Sigmoid colon (tissue), 7 donors: ENCODE measurements at regions of chr14 and their contacts with region 1.

Region 1: DNA sequence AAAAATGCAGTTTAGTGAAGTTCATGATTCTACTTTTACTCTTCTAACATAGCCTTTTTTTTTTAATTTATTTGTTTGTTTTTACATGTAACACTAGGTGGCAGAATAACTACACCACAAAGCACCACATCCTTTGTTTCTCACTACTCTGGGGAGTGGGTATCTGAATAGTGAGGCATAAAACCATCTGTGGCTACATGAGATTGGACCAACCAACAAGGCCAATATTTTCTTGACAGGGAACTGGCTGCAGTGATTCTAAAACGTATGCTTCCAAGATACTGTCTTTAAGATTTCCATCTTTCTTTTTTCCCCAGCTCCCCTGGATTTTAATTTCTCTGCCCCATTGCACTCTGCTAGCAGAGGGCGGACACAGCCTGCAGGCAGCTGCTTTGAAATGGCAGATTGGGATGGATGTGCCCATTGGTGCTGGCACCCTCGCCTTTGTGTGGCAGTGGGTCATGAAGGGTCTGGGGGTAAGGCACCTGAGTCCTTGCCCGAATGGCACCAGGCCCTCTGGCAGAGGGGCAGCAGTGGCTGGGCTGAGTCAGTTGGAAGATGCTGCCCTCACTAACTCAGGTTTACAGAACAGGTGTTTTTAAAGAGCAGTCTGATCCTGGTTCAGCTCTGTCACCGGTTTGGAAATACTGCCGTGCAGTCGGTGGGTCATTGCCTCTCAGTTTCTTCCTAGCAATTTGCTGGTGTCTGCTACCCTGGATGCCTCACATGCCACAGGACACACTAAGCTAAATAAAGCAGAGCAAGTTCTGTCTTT is 429.1 kb downstream of the RAD51B start:
- DNase-seq: peak; percentile 77
- H3K4me3 ChIP-seq: no peak overlapping the region
- H3K27ac ChIP-seq: peak overlapping the region; percentile 81 to 90 (median 88)
- H3K4me1 ChIP-seq: peaks cover 0 to 93% (median 82%) of the 10 kb centered on the region in 4 donors
- H3K27me3 ChIP-seq: no peaks in the 10 kb centered on the region
- CTCF ChIP-seq: peak in 3 of 4 experiments; percentile 50 to 75 (median 66)
- EP300 ChIP-seq: peak in 1 of 4 donors; percentile 14
- POLR2A ChIP-seq: no peak

Region 2: GRCh38 chr14:67583711-67584644 is 664.7 kb before region 1 on chr14:
- intact Hi-C with region 1: no loop called
- DNase-seq: no peak
- H3K4me3 ChIP-seq: no peak overlapping the region
- H3K27ac ChIP-seq: no peak overlapping the region
- H3K4me1 ChIP-seq: no peaks in the 10 kb centered on the region
- H3K27me3 ChIP-seq: no peaks in the 10 kb centered on the region
- CTCF ChIP-seq: peak; percentile 34 to 54 (median 42)
- EP300 ChIP-seq: no peak
- POLR2A ChIP-seq: no peak

Region 3: DNA sequence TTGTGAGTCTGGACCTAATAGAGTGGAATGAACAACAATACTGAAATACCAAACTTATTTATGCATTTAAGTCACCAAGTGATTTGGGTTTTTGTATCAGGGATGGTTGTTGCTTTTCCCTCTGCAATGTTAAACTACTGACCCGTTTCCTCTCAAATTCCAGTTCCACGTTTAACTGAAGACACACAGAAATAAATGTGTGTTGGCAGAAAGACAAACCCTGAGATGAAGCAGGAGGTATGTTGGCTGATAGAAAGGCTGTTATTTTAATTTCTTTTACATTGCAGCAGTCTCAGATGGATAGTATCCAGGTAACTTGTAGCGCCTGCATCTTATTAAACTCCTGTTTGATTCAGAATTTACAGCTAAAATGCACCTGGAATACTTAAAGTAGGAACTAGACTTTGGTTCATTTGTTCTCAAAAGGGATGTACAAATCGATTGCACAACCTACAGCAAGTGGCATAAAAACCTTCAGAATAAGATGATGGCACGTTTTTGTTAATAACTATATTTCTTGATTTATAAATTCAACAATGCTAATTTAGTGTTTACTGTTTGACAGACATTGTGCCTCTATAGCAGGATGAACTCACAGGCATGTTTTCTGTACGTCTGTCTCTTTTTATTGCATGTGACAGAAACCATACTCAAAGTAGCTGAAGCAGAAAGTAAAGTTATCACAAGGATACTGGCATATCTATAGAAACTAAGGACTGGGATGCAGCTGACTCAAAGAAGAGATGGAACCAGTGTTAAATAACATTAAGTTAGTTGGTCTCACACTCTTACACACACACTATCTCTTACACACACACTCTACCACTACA is 138.5 kb after region 1 on chr14:
- intact Hi-C with region 1: loop called (anchors 5 kb)
- DNase-seq: no peak
- H3K4me3 ChIP-seq: no peak overlapping the region
- H3K27ac ChIP-seq: peak overlapping the region in 3 of 4 donors; percentile 42 to 77 (median 74)
- H3K4me1 ChIP-seq: peaks cover 0 to 77% (median 58%) of the 10 kb centered on the region in 4 donors
- H3K27me3 ChIP-seq: no peaks in the 10 kb centered on the region
- CTCF ChIP-seq: no peak
- EP300 ChIP-seq: peak in 2 of 4 donors; percentile 58 to 64
- POLR2A ChIP-seq: no peak

Region 4: GRCh38 chr14:68520637-68521556 is 272.2 kb after region 1 on chr14:
- intact Hi-C with region 1: loop called (anchors 5 kb)
- DNase-seq: no peak
- H3K4me3 ChIP-seq: no peak overlapping the region
- H3K27ac ChIP-seq: peak overlapping the region; percentile 52 to 73 (median 71)
- H3K4me1 ChIP-seq: peaks cover 0 to 74% (median 50%) of the 10 kb centered on the region in 4 donors
- H3K27me3 ChIP-seq: no peaks in the 10 kb centered on the region
- CTCF ChIP-seq: no peak
- EP300 ChIP-seq: no peak
- POLR2A ChIP-seq: no peak

Region 5: DNA sequence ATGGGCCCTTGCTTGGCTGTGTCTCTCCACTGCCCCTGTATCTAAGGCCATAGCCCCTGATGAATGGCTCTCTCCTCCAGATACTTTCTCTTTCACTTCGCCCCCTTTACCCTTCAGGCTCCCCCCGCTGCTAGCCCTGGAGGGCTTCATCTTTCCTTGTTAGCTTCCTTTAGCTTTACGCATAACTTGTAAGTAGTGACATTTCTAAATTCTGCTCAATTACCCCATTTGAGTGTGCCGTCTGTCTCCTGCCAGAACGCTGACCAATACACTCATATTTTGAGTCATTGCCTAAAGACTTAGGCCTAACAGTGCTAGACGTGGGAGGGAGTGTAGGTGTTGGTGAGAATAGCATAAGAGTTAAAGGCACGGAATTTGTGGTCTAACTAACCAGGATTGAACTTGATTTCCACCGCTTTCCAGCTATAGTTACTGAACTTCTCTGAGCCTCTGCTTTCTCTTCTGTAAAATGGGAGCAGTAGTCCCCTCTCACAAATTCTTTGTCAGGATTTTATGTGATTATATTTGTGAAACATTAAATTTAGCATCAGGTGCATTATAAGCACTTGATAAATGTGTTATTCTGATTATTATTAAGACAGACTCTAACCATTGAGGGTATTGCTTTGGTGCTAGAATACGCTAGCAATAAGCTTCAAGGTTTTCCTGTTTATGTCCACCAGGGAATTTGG is 414.9 kb after region 1 on chr14:
- intact Hi-C with region 1: loop called (anchors 5 kb)
- DNase-seq: peak; percentile 56
- H3K4me3 ChIP-seq: no peak overlapping the region
- H3K27ac ChIP-seq: peak overlapping the region; percentile 70 to 88 (median 81)
- H3K4me1 ChIP-seq: peaks cover 0 to 87% (median 73%) of the 10 kb centered on the region in 4 donors
- H3K27me3 ChIP-seq: no peaks in the 10 kb centered on the region
- CTCF ChIP-seq: no peak
- EP300 ChIP-seq: no peak
- POLR2A ChIP-seq: no peak

Region 6: GRCh38 chr14:68816262-68816942 is 567.7 kb after region 1 on chr14:
- intact Hi-C with region 1: loop called (anchors 2 kb)
- DNase-seq: peak; percentile 96
- H3K4me3 ChIP-seq: peak overlapping the region; percentile 35 to 52 (median 50)
- H3K27ac ChIP-seq: peak overlapping the region; percentile 93 to 99 (median 96)
- H3K4me1 ChIP-seq: peaks cover 0 to 77% (median 69%) of the 10 kb centered on the region in 4 donors
- H3K27me3 ChIP-seq: no peaks in the 10 kb centered on the region
- CTCF ChIP-seq: peak; percentile 92 to 99 (median 98)
- EP300 ChIP-seq: peak in 1 of 4 donors; percentile 47
- POLR2A ChIP-seq: peak; percentile 15 to 38